Heart left ventricle (tissue), 16 donors: ENCODE measurements at regions of chr4 and their contacts with region 1.

Region 1: GRCh38 chr4:124111922-124112321 is 600.6 kb downstream of the ANKRD50 start:
- DNase-seq: peak in 1 of 5 donors; percentile 41
- ATAC-seq: peak; percentile 78 to 96 (median 87)
- H3K4me3 ChIP-seq: no peak overlapping the region
- H3K27ac ChIP-seq: peak overlapping the region in 6 of 12 donors; percentile 19 to 54 (median 32)
- H3K4me1 ChIP-seq: peaks cover 0 to 18% (median 6%) of the 10 kb centered on the region in 12 donors
- H3K27me3 ChIP-seq: no peaks in the 10 kb centered on the region
- CTCF ChIP-seq: peak; percentile 54 to 85 (median 78)
- POLR2A ChIP-seq: no peak

Region 2: GRCh38 chr4:123102897-123103471 is 1008.9 kb before region 1 on chr4:
- intact Hi-C with region 1: loop called in 8 of 10 experiments (anchors 2 to 10 kb)
- DNase-seq: no peak
- ATAC-seq: peak in 3 of 4 donors; percentile 57 to 85 (median 66)
- H3K4me3 ChIP-seq: no peak overlapping the region
- H3K27ac ChIP-seq: no peak overlapping the region
- H3K4me1 ChIP-seq: peaks cover 0 to 20% (median 0%) of the 10 kb centered on the region in 12 donors
- H3K27me3 ChIP-seq: no peaks in the 10 kb centered on the region
- CTCF ChIP-seq: peak; percentile 55 to 85 (median 74)
- POLR2A ChIP-seq: no peak

Region 3: DNA sequence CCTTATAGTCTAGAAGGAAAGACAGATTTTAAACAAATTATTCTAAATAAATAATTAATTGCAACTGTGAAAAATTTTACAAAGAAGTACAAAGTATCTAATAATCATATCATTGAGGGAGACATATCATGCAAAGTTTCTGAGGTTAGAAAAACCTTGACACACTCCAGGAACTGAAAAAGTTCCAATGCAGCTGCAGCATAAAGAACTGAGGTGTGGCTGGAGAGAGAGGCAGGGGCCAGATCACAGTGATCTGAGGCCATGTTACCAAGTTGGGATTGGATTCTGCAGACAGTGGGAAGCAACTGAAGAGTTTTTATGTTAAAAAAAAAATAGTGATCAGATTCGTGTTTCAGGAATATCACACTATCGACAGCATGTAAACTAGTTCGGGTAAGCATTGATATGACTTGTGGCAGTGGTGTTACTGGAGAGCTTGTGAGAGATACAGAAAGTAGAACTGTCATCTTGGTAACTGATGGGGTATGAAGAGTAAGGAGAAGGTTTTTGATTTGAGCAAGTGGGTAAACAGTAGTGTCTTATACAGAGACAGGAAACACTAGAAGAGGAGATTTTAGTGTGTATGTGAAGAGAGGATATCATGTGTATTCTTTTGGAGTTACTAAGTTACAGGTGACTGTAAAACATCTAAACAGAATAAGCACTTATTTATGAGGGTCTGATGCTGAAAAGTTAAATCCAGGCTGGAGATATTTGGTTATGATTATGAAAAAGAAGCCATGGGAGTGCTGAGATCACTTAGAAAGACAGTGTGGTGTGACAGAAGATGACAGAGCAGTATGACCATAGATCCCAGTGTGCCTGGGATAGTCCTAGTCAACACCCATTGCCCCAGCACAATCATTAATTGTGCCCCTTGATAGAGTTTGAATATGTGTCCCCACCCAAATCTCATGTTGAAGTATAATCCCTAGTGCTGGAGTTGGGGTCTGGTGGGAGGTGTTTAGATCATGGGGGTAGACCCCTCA is 730.9 kb before region 1 on chr4:
- intact Hi-C with region 1: loop called in 1 of 10 experiments (anchors 10 kb)
- DNase-seq: no peak
- ATAC-seq: no peak
- H3K4me3 ChIP-seq: no peak overlapping the region
- H3K27ac ChIP-seq: no peak overlapping the region
- H3K4me1 ChIP-seq: peaks cover 0 to 5% (median under 1%) of the 10 kb centered on the region in 12 donors
- H3K27me3 ChIP-seq: no peaks in the 10 kb centered on the region
- CTCF ChIP-seq: no peak
- POLR2A ChIP-seq: no peak

Region 4: DNA sequence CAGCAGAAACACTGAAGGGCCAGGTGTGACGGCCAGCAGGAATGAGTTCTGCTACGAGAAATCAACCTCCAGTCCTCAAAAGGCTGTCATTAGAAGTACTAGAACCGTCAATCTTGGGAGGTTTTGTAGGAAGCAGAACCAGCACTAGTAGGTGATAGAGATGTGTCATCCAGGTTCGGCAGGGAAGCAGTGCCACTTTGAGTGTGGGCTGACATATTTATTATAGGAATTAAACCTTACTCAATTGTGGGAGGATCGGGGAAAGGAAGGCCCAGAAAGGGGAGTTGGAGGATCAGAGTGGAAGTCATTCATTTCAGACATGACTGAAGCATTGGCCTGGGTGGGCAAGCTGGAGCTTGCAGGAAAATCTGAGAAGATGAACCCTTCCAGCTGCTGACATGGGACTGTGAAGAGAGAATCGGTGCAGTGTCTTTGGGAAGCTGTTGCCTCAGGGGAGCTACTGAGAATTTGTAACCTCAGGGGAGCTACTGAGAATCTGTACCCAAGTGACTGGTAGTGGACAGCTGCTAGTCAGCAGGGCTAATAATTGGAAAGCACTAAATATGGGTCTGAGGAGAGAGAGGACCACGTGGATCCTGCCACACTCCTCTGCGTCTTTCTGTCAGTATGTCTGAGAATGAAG is 537.9 kb before region 1 on chr4:
- intact Hi-C with region 1: loop called in 4 of 10 experiments (anchors 5 to 10 kb)
- DNase-seq: no peak
- ATAC-seq: no peak
- H3K4me3 ChIP-seq: no peak overlapping the region
- H3K27ac ChIP-seq: no peak overlapping the region
- H3K4me1 ChIP-seq: peaks cover 0 to 9% (median 0%) of the 10 kb centered on the region in 12 donors
- H3K27me3 ChIP-seq: no peaks in the 10 kb centered on the region
- CTCF ChIP-seq: no peak
- POLR2A ChIP-seq: no peak

Region 5: GRCh38 chr4:123770884-123771283 is 341.0 kb before region 1 on chr4:
- intact Hi-C with region 1: loop called (anchors 1 to 10 kb)
- DNase-seq: no peak
- ATAC-seq: no peak
- H3K4me3 ChIP-seq: no peak overlapping the region
- H3K27ac ChIP-seq: no peak overlapping the region
- H3K4me1 ChIP-seq: no peaks in the 10 kb centered on the region
- H3K27me3 ChIP-seq: no peaks in the 10 kb centered on the region
- CTCF ChIP-seq: no peak
- POLR2A ChIP-seq: no peak

Region 6: DNA sequence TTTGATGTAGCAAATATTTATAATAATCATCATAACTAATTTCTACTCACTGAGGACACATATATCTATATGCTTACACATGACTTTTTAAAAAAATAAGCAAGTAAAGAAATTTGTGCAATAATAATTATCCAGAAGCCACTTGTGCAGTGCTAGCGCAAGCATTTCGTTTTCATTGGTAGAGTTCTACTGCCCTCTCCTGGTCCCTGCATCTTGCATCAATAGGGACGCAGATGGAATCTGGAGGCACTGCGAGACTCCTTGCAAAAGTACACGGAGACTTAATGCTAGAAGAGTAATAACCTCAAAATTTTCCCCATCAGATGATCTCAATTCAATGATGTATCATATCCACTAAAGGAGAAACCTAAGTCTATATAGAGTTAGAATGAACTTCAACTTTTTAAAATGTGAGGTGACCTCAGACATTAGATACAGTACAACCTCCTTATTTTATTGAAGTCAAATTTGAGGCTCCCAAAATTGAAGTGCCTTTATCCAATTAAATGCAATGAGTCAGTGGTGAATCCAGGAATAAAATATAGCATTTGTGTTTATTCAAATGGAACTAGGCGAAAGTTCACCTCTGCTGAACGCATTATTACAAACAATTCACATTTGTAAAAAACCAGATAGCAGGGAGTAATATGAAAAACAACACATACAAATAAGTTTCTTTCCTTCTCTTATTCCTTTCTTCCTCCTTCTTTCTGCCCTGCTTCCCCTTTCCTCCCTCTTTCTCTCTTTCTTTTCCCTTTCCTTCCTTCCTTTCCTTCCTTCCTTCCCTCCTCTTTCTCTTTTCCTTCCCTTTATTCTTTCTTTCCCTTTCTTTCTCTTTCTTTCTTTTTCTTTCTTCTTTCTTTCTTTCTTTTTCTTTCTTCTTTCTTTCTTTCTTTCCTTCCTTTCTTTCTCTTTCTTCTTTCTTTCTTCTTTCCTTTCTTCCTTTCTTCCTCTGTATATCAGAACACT is 150.6 kb after region 1 on chr4:
- intact Hi-C with region 1: loop called in 3 of 10 experiments (anchors 5 to 10 kb)
- DNase-seq: peak in 4 of 5 donors; percentile 36 to 58 (median 51)
- ATAC-seq: peak in 3 of 4 donors; percentile 82 to 96 (median 87)
- H3K4me3 ChIP-seq: no peak overlapping the region
- H3K27ac ChIP-seq: peak overlapping the region in 1 of 12 donors; percentile 19
- H3K4me1 ChIP-seq: peaks cover 0 to 6% (median 0%) of the 10 kb centered on the region in 12 donors
- H3K27me3 ChIP-seq: no peaks in the 10 kb centered on the region
- CTCF ChIP-seq: peak; percentile 69 to 95 (median 84)
- POLR2A ChIP-seq: no peak

Region 7: GRCh38 chr4:124372916-124373315 is 261.0 kb after region 1 on chr4:
- intact Hi-C with region 1: no loop called
- DNase-seq: no peak
- ATAC-seq: no peak
- H3K4me3 ChIP-seq: no peak overlapping the region
- H3K27ac ChIP-seq: no peak overlapping the region
- H3K4me1 ChIP-seq: no peaks in the 10 kb centered on the region
- H3K27me3 ChIP-seq: no peaks in the 10 kb centered on the region
- CTCF ChIP-seq: no peak
- POLR2A ChIP-seq: no peak